ENCODE measurements at regions of chr16 and their contacts with region 1.

Region 1: GRCh38 chr16:22721511-22722100 is 92.4 kb upstream of the HS3ST2 start:
- DNase-seq: no peak
- ATAC-seq: no peak
- H3K4me3 ChIP-seq: no peak overlapping the region
- H3K27ac ChIP-seq: no peak overlapping the region
- H3K4me1 ChIP-seq: no peaks in the 10 kb centered on the region
- H3K27me3 ChIP-seq: peaks cover 5 to 20% of the 10 kb centered on the region in 2 experiments; a peak in 4 of 5 replicates
- CTCF ChIP-seq: no peak
- EP300 ChIP-seq: no peak
- POLR2A ChIP-seq: no peak
- RAD21 ChIP-seq: no peak

Region 2: DNA sequence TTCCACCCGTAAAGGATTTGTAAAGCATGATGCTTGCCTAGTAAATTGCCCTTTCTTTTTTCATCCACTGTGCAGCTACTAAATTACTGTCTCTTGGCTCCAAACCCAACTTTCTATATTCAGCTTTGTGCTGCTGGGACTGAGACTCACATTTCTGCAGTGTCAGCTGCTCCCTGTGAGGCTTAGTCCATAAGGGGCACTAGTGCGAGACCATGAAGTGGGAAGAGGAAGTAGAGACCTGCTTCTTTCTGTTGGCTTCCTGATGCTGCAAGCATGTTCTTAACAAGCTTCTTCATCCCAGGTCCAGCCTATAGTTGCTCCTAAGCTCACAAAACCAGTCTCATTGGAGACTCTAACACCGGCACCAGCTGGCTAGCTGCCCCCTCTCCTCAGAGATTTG is 17.5 kb after region 1 on chr16:
- CTCF ChIA-PET with region 1: no interaction called
- POLR2A ChIA-PET with region 1: no interaction called
- in situ Hi-C with region 1: no loop called
- intact Hi-C with region 1: no loop called
- DNase-seq: no peak
- ATAC-seq: no peak
- H3K4me3 ChIP-seq: no peak overlapping the region
- H3K27ac ChIP-seq: no peak overlapping the region
- H3K4me1 ChIP-seq: peaks cover 5% of the 10 kb centered on the region; the same call in 1 of the 2 replicates
- H3K27me3 ChIP-seq: peaks cover 0 to 13% of the 10 kb centered on the region in 2 experiments; a peak in 2 of 5 replicates
- CTCF ChIP-seq: no peak
- EP300 ChIP-seq: no peak
- POLR2A ChIP-seq: no peak
- RAD21 ChIP-seq: no peak

Region 3: GRCh38 chr16:22787466-22788189 is 66.0 kb after region 1 on chr16:
- CTCF ChIA-PET with region 1: no interaction called
- POLR2A ChIA-PET with region 1: no interaction called
- in situ Hi-C with region 1: no loop called
- intact Hi-C with region 1: loop called (anchors 10 kb)
- DNase-seq: no peak
- ATAC-seq: no peak
- H3K4me3 ChIP-seq: no peak overlapping the region
- H3K27ac ChIP-seq: no peak overlapping the region
- H3K4me1 ChIP-seq: no peaks in the 10 kb centered on the region
- H3K27me3 ChIP-seq: peaks cover 3 to 37% of the 10 kb centered on the region in 2 experiments; a peak in 4 of 5 replicates
- CTCF ChIP-seq: no peak
- EP300 ChIP-seq: no peak
- POLR2A ChIP-seq: no peak
- RAD21 ChIP-seq: no peak

Region 4: DNA sequence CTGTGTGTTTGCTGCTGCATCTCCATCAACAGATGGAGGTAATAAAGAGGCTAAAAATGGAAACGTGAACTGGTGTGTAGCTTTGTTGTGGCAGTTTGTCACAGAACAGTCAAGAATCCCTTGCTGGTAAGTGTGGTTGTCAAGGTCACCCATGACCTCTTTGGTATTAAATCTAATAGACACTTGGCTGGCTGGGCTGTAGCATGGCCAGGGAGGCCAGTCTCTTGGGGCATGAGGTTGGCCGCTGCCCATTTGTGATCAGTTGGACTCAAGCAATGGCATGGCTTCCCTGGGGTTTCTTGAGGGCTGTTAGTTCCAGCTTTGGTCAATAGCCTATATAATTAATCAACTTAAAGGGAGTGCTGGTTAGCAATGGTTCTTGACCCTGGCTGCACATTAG is 77.5 kb after region 1 on chr16:
- CTCF ChIA-PET with region 1: no interaction called
- POLR2A ChIA-PET with region 1: no interaction called
- in situ Hi-C with region 1: no loop called
- intact Hi-C with region 1: no loop called
- DNase-seq: no peak
- ATAC-seq: no peak
- H3K4me3 ChIP-seq: no peak overlapping the region
- H3K27ac ChIP-seq: no peak overlapping the region
- H3K4me1 ChIP-seq: no peaks in the 10 kb centered on the region
- H3K27me3 ChIP-seq: no peaks in the 10 kb centered on the region
- CTCF ChIP-seq: no peak
- EP300 ChIP-seq: no peak
- POLR2A ChIP-seq: no peak
- RAD21 ChIP-seq: no peak